K562 (cell line): ENCODE measurements at regions of chr10 and their contacts with region 1.

Region 1: GRCh38 chr10:124388823-124389612 is 29.7 kb downstream of the OAT start:
- DNase-seq: peak; percentile 87 to 99 (median 98)
- ATAC-seq: peak; percentile 99
- H3K4me3 ChIP-seq: peak overlapping the region; percentile 21; the same call in 1 of the 2 replicates
- H3K27ac ChIP-seq: no peak overlapping the region
- H3K4me1 ChIP-seq: peaks cover 4 to 16% of the 10 kb centered on the region in 2 experiments; a peak in 4 of 5 replicates
- H3K27me3 ChIP-seq: peaks cover 0 to 25% of the 10 kb centered on the region in 2 experiments; a peak in 3 of 5 replicates
- CTCF ChIP-seq: peak; percentile 70 to 90 (median 87)
- EP300 ChIP-seq: no peak
- POLR2A ChIP-seq: no peak
- RAD21 ChIP-seq: peak; percentile 90 to 92

Region 2: DNA sequence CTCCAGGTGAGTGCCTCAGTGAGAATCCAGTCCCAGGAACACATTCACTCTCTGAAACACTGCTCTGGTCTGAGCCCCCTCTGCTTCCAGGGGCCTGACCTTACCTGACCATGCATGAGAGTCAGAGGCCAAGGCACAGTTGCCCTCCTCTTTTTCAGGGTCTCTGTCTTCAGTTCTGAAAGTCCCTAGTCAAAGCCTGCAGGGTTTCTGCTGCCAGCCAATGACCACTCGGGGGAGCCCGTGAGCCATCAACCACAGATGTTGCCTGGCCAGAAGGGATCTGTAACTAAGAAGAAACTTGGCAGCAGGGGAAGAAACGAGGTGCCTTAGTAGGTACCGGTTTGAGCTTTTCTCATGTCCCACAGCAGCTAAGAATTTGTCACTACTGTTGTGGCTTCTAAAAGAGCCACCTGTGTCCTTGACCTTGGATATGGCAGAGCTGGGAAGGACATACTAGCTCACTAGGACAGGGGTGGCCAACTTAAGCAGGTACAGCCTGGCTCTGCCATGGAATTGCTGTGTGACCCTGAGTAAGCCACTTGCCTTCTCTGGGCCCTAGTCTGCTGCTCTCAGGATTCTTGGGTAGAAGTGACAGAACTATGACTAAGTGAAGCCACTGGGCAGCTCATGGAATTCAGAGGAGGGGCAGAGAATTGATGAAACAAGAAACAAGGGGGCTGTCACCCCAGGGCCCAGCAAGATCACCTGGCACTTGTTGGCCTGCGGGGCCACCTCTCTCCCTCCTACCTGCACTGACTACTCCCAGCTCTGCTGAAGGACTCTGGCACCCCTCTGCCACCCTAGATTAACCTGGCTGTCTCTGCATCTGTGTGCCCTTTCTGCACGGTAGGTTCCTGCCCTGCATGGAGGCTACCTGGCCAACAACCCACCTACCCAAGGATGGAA is 806.7 kb before region 1 on chr10:
- CTCF ChIA-PET with region 1: no interaction called
- POLR2A ChIA-PET with region 1: no interaction called
- in situ Hi-C with region 1: loop called (anchors 25 kb)
- intact Hi-C with region 1: no loop called
- DNase-seq: peak; percentile 54 to 59 (median 57)
- ATAC-seq: peak; percentile 86
- H3K4me3 ChIP-seq: no peak overlapping the region
- H3K27ac ChIP-seq: no peak overlapping the region
- H3K4me1 ChIP-seq: no peaks in the 10 kb centered on the region; a peak in 1 of 5 replicates
- H3K27me3 ChIP-seq: peaks cover 0 to 17% of the 10 kb centered on the region in 2 experiments; a peak in 2 of 5 replicates
- CTCF ChIP-seq: peak; percentile 69 to 75 (median 70)
- EP300 ChIP-seq: no peak
- POLR2A ChIP-seq: no peak
- RAD21 ChIP-seq: peak; percentile 47 to 74

Region 3: GRCh38 chr10:123994417-123995081 is 394.5 kb before region 1 on chr10:
- CTCF ChIA-PET with region 1: interaction called, 26 read pairs
- POLR2A ChIA-PET with region 1: interaction called, 3 read pairs
- in situ Hi-C with region 1: no loop called
- intact Hi-C with region 1: loop called (anchors 1 kb)
- DNase-seq: peak; percentile 76 to 86 (median 82)
- ATAC-seq: peak; percentile 97
- H3K4me3 ChIP-seq: no peak overlapping the region
- H3K27ac ChIP-seq: no peak overlapping the region
- H3K4me1 ChIP-seq: peaks cover 0 to 12% of the 10 kb centered on the region in 2 experiments; a peak in 2 of 5 replicates
- H3K27me3 ChIP-seq: no peaks in the 10 kb centered on the region
- CTCF ChIP-seq: peak; percentile 76 to 84 (median 81)
- EP300 ChIP-seq: no peak
- POLR2A ChIP-seq: no peak
- RAD21 ChIP-seq: peak; percentile 77 to 84

Region 4: GRCh38 chr10:124259139-124259825 is 129.7 kb before region 1 on chr10:
- CTCF ChIA-PET with region 1: no interaction called
- POLR2A ChIA-PET with region 1: no interaction called
- in situ Hi-C with region 1: no loop called
- intact Hi-C with region 1: loop called (anchors 10 kb)
- DNase-seq: no peak
- ATAC-seq: no peak
- H3K4me3 ChIP-seq: no peak overlapping the region
- H3K27ac ChIP-seq: no peak overlapping the region
- H3K4me1 ChIP-seq: no peaks in the 10 kb centered on the region
- H3K27me3 ChIP-seq: peaks cover 0 to 6% of the 10 kb centered on the region in 2 experiments; a peak in 1 of 5 replicates
- CTCF ChIP-seq: peak in 1 of 3 experiments; percentile 16; a peak in 1 of 6 replicates
- EP300 ChIP-seq: no peak
- POLR2A ChIP-seq: no peak
- RAD21 ChIP-seq: peak in 1 of 2 experiments; percentile 32; a peak in 1 of 4 replicates